Natural killer cell (primary cell): ENCODE measurements at regions of chr17 and their contacts with region 1.

Region 1: DNA sequence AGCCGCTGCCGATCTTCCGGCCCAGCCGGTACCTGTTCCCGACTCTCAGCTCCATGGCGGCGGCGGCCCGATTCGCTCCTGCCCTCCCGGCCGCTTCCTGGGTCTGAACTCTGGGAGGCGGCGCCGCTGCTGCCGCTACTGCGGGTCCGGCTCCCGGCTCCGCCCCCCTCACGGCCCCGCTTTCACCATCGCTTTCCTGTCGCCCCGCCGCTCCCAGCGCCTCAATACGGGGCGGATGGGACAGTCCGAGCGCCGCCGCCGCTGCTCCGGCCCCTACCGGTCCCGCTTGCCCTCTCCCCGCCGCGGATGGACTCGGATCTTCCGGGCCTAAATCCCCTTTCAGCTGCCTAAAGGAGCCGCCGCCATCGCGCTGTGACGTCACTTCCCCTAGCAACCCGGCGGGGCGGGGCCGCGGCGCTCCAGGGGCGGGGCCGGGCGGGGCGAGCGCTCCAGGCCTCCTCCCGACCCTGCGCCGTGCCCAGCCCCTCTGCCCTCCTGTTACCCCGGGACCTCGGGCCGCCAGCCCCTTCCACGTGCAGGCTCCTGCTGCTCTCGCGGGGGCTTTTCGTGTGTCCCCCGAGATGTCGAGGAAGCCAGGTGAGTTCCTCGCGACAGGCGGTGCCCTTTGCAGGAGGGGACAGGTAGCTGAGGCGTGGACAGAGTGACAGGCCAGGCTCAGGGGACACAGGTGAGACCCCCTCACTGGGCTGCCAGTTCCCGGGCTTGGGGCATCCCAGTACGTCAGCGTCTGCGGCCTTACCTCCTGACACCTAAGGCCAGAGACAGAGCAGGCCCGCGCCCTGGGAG is at the start of gene CSNK1D:
- DNase-seq: peak; percentile 93 to 95
- ATAC-seq: peak; percentile 80 to 90 (median 81)
- H3K4me3 ChIP-seq: peak within 1 kb of the TSS; percentile 53
- H3K4me3 Mint-ChIP-seq: peak within 1 kb of the TSS; percentile 91
- H3K27ac ChIP-seq: peak within 1 kb of the TSS; percentile 83
- H3K27ac Mint-ChIP-seq: peak within 1 kb of the TSS; percentile 87 to 91
- H3K4me1 ChIP-seq: peaks cover 49% of the 10 kb centered on the region
- H3K4me1 Mint-ChIP-seq: peaks cover 37 to 43% of the 10 kb centered on the region in 2 donors
- H3K27me3 ChIP-seq: no peaks in the 10 kb centered on the region
- H3K27me3 Mint-ChIP-seq: no peaks in the 10 kb centered on the region
- CTCF ChIP-seq: no peak
- total RNA-seq, gene CSNK1D: 423 to 475 (median 468) TPM

Region 2: DNA sequence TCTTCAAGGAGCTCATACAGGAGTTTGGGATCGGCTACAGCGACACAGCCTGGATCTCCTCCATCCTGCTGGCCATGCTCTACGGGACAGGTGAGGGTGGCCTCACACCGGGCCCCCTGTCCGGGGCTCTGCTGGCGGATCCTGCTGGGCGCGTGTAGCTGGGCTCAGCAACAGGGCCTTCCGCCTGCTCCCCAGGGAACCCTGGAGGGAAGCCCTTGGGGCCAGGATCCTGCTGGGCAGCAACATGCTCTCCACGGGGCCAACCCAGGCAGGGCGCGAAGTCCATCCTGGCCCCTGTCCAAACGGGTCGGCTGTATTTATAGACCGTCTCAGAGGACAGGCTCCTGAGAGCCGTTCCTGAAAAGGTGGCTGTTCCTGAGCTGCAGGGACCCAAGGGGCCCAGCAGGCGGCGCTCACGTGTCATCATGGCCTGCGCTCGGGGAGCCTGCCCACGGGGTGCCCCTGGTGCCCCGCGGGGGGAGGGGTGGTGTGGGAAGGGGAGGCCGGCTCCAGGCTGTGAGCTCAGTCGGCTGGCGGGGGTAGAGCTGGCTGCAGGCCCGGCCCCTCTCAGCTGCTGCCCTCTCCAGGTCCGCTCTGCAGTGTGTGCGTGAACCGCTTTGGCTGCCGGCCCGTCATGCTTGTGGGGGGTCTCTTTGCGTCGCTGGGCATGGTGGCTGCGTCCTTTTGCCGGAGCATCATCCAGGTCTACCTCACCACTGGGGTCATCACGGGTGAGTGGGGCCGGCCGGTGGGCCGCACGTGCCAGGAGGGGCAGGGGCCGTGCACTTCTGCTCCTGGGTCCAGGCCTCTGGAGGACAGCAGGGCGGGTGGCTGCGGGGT is 37.2 kb before region 1 on chr17:
- intact Hi-C with region 1: loop called (anchors 5 kb)
- DNase-seq: peak; percentile 72 to 86
- ATAC-seq: peak; percentile 44 to 57 (median 46)
- H3K4me3 ChIP-seq: no peak overlapping the region
- H3K4me3 Mint-ChIP-seq: no peak overlapping the region
- H3K27ac ChIP-seq: peak overlapping the region; percentile 27
- H3K27ac Mint-ChIP-seq: peak overlapping the region; percentile 58 to 72
- H3K4me1 ChIP-seq: peaks cover 70% of the 10 kb centered on the region
- H3K4me1 Mint-ChIP-seq: peaks cover 27 to 56% of the 10 kb centered on the region in 2 donors
- H3K27me3 ChIP-seq: no peaks in the 10 kb centered on the region
- H3K27me3 Mint-ChIP-seq: no peaks in the 10 kb centered on the region
- CTCF ChIP-seq: peak; percentile 82

Region 3: GRCh38 chr17:82257473-82257872 is 16.1 kb before region 1 on chr17:
- intact Hi-C with region 1: loop called (anchors 2 kb)
- DNase-seq: peak; percentile 85 to 89
- ATAC-seq: peak; percentile 96 to 100 (median 97)
- H3K4me3 ChIP-seq: no peak overlapping the region
- H3K4me3 Mint-ChIP-seq: peak overlapping the region; percentile 88
- H3K27ac ChIP-seq: peak overlapping the region; percentile 72
- H3K27ac Mint-ChIP-seq: peak overlapping the region; percentile 100
- H3K4me1 ChIP-seq: peaks cover 12% of the 10 kb centered on the region
- H3K4me1 Mint-ChIP-seq: peaks cover 45 to 63% of the 10 kb centered on the region in 2 donors
- H3K27me3 ChIP-seq: no peaks in the 10 kb centered on the region
- H3K27me3 Mint-ChIP-seq: no peaks in the 10 kb centered on the region
- CTCF ChIP-seq: peak; percentile 16

Region 4: DNA sequence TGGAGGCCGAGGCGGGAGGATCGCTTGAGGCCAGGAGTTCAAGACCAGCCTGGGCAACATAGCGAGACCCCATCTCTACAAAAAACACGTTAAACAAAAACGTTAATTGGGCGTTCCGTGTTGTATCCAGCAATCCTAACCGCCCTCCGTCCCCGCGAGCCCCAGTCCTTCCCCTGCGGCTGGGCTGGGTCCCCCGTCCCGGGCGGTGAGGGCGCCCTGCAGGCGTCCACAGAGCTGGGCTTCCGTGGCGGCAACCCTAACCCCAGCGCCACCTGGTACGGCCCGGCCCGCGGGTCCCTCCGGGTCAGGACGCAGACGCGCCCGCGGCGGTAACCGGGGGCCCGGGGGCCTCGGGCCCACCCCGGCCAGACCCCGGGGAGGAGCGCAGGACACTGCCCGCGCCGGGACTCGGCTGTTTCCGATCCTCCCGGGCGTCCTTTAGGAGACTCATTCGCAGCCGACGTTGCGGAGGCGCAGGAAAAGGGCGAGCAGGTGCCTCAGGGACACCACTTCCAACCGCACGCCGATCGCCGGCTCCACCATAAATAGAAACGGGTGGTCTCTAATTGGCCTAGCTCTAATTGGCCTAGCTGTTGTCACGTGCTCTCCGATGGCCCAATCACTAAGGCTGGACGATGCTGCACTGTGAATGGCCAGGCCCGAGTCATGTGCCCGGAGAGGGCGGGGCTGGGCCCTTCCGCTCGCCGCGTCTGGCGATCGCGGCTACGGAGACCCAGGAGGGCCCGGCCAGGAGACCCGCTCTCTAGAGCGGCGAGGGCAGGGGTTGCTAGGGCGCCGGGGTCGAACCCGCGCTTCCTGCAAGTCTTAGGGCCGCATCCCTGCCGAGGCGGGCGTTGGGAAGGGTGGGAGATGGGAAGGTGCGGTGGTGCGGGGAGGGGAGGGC is 19.0 kb after region 1 on chr17:
- intact Hi-C with region 1: loop called (anchors 1 kb)
- DNase-seq: peak; percentile 89 to 97
- ATAC-seq: peak; percentile 85 to 97 (median 87)
- H3K4me3 ChIP-seq: peak overlapping the region; percentile 72
- H3K4me3 Mint-ChIP-seq: peak overlapping the region; percentile 84
- H3K27ac ChIP-seq: peak overlapping the region; percentile 99
- H3K27ac Mint-ChIP-seq: peak overlapping the region; percentile 77 to 87
- H3K4me1 ChIP-seq: peaks cover 30% of the 10 kb centered on the region
- H3K4me1 Mint-ChIP-seq: peaks cover 20 to 44% of the 10 kb centered on the region in 2 donors
- H3K27me3 ChIP-seq: no peaks in the 10 kb centered on the region
- H3K27me3 Mint-ChIP-seq: no peaks in the 10 kb centered on the region
- CTCF ChIP-seq: no peak